CD4-positive, alpha-beta memory T cell (primary cell): ENCODE measurements at regions of chr16 and their contacts with region 1.

Region 1: DNA sequence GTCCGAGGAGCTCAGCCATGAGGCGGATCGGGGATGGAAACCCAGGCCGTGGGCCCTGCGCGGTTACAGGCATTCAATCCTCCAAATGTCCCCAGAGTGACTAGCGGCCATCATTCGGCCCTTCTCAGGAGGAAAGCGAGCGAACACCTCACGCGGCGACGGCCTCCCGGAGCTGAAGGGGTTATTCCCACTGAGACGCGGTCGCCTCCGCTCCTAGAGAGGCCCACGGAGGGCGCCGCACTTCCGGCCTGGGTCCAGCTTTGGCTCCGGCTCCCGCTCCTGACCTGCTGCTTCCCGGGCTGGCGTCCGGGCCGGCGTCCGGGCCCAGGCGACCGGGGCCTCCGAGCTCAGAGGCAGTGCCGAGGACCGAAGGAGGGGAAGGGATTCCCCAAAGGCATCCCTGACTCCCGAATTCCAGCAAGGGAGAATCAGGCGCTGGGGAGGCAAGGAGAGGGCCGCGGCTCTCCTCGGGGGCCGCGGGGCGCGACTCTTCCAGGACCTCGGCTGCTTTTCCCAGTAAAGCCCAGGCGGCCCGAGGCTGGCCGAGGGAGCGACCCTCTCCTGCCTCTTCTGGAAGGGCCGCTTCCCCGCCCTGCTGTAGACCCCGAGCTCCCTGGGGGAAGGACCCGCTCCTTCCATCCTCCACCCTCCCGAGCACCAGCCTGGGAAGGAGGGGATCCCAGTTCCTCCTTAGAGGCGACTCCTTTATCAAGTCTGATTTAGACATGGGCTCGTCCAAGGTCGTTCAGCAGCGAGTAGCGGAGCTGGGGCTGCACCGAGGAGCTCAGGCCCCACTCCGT is 18.6 kb upstream of the ZNF629 start:
- DNase-seq: peak; percentile 40 to 51 (median 42)
- H3K4me3 ChIP-seq: peak overlapping the region; percentile 43 to 54
- H3K4me3 Mint-ChIP-seq: peak overlapping the region; percentile 73 to 91 (median 80)
- H3K27ac ChIP-seq: peak overlapping the region; percentile 47
- H3K27ac Mint-ChIP-seq: peak overlapping the region; percentile 25 to 84 (median 50)
- H3K4me1 ChIP-seq: peaks cover 19% of the 10 kb centered on the region
- H3K4me1 Mint-ChIP-seq: peaks cover 9 to 28% (median 13%) of the 10 kb centered on the region in 4 donors
- H3K27me3 ChIP-seq: no peaks in the 10 kb centered on the region
- H3K27me3 Mint-ChIP-seq: no peaks in the 10 kb centered on the region

Region 2: GRCh38 chr16:30637942-30638341 is 167.6 kb before region 1 on chr16:
- CTCF ChIA-PET with region 1: no interaction called
- POLR2A ChIA-PET with region 1: no interaction called
- intact Hi-C with region 1: no loop called
- DNase-seq: peak in 4 of 5 donors; percentile 35 to 54 (median 36)
- H3K4me3 ChIP-seq: no peak overlapping the region
- H3K4me3 Mint-ChIP-seq: no peak overlapping the region
- H3K27ac ChIP-seq: no peak overlapping the region
- H3K27ac Mint-ChIP-seq: peak overlapping the region in 2 of 7 donors; percentile 53 to 68
- H3K4me1 ChIP-seq: peaks cover 13% of the 10 kb centered on the region
- H3K4me1 Mint-ChIP-seq: peaks cover 2 to 16% (median 10%) of the 10 kb centered on the region in 4 donors
- H3K27me3 ChIP-seq: no peaks in the 10 kb centered on the region
- H3K27me3 Mint-ChIP-seq: no peaks in the 10 kb centered on the region

Region 3: GRCh38 chr16:30747799-30748634 is 57.6 kb before region 1 on chr16 and contains the start of gene PHKG2:
- CTCF ChIA-PET with region 1: no interaction called
- POLR2A ChIA-PET with region 1: interaction called, 22 read pairs
- intact Hi-C with region 1: loop called (anchors 5 kb)
- DNase-seq: peak; percentile 94 to 96 (median 95)
- H3K4me3 ChIP-seq: peak within 1 kb of the TSS; percentile 65 to 71
- H3K4me3 Mint-ChIP-seq: peak within 1 kb of the TSS; percentile 89 to 97 (median 91)
- H3K27ac ChIP-seq: peak within 1 kb of the TSS; percentile 60
- H3K27ac Mint-ChIP-seq: peak within 1 kb of the TSS; percentile 73 to 94 (median 89)
- H3K4me1 ChIP-seq: peaks cover 7% of the 10 kb centered on the region
- H3K4me1 Mint-ChIP-seq: peaks cover 14 to 33% (median 20%) of the 10 kb centered on the region in 4 donors
- H3K27me3 ChIP-seq: no peaks in the 10 kb centered on the region
- H3K27me3 Mint-ChIP-seq: no peaks in the 10 kb centered on the region
- total RNA-seq, gene PHKG2: 54.1 to 54.9 TPM

Region 4: DNA sequence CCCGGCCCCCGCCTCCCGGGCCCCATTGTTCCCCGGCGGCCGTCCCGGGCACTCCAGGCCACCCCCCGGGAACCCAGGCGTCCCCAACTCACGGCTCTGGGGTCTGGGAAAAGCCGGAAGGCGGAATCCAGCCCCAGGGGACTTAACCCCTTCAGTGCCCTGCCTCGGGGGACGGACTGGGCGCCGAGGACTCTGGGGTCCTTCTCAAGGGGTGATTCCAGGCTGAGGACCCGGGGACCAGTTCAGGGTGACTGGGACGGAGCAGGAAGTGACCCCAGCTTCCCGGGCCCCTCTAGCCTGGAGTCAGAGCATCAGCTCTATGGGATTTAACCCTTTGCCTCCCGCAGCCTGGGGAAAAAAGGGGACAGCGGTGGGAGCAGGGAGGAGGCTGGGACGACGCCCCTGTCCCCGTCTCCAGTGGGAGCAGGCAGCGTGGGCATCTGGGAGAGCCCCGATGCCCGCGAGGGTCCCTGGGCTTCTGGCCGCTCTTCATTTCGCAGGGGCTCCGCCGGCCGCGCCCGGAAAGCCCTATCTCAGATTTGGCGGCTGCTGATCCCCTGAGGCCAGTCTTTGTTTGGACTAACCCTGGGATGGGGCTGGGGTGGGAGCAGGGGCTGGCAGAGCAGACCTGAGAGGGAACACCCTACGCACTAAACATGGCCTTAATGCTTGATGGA is 18.5 kb before region 1 on chr16 and contains the start of gene ZNF629:
- CTCF ChIA-PET with region 1: interaction called, 3 read pairs
- POLR2A ChIA-PET with region 1: interaction called, 12 read pairs
- intact Hi-C with region 1: loop called (anchors 1 kb)
- DNase-seq: peak in 1 of 5 donors; percentile 12
- H3K4me3 ChIP-seq: peak within 1 kb of the TSS; percentile 36 to 44
- H3K4me3 Mint-ChIP-seq: peak within 1 kb of the TSS; percentile 78 to 85 (median 80)
- H3K27ac ChIP-seq: no peak within 1 kb of the TSS
- H3K27ac Mint-ChIP-seq: peak within 1 kb of the TSS in 3 of 7 donors; percentile 23 to 70 (median 35)
- H3K4me1 ChIP-seq: peaks cover 10% of the 10 kb centered on the region
- H3K4me1 Mint-ChIP-seq: peaks cover 5 to 26% (median 17%) of the 10 kb centered on the region in 4 donors
- H3K27me3 ChIP-seq: peaks cover 5% of the 10 kb centered on the region
- H3K27me3 Mint-ChIP-seq: peaks cover 3 to 5% of the 10 kb centered on the region in 2 donors
- total RNA-seq, gene ZNF629: 4.7 to 5.4 TPM

Region 5: DNA sequence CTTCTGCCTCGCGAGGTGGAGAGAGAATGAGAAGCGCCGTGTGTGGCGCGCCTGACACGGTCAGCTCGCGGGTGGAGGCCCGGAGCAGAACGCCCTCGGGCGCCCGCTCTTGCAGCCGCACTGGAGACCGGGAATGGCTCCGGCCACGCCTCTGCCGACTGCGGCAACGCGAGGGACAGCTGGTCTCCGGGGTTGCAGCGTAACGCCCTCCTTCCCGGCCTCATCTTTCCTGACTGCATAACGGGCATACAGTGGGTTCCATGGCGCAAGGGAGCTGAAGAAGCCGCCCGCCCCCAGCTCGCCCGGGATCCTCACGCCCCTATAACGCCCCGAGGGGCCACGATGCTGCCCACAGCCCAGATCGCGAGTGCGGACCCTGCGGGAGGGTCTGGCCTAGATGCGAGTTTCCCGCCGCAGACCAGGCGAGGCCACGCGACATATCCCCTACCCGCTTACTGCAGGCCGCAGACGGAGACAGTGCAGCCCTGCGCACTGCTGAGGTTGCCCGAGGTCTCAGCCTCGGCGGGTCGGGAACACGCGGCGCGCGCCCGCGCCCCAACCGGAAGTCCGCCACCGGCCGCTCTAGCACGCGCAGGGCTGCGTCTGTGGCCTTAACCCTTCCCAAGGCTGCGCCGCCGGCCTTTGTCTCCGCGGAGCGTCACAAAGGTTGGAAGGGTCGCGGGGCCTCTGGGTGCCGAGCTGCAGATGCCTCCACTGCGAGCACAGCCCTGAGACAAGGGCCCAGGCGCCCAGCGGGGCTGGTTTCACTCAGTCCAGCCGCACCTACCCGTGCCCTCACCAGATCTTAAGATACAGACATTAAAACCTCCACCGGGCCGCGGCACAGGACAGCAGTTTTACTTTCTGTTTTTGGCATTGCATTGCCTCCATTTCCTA is 69.5 kb after region 1 on chr16:
- CTCF ChIA-PET with region 1: interaction called, 6 read pairs
- POLR2A ChIA-PET with region 1: interaction called, 45 read pairs
- intact Hi-C with region 1: loop called (anchors 1 kb)
- DNase-seq: peak; percentile 85 to 89 (median 87)
- H3K4me3 ChIP-seq: peak overlapping the region; percentile 89 to 94
- H3K4me3 Mint-ChIP-seq: peak overlapping the region; percentile 92 to 99 (median 97)
- H3K27ac ChIP-seq: peak overlapping the region; percentile 84
- H3K27ac Mint-ChIP-seq: peak overlapping the region; percentile 91 to 99 (median 94)
- H3K4me1 ChIP-seq: peaks cover 23% of the 10 kb centered on the region
- H3K4me1 Mint-ChIP-seq: peaks cover 16 to 50% (median 31%) of the 10 kb centered on the region in 4 donors
- H3K27me3 ChIP-seq: no peaks in the 10 kb centered on the region
- H3K27me3 Mint-ChIP-seq: no peaks in the 10 kb centered on the region

Region 6: GRCh38 chr16:30902029-30902972 is 96.7 kb after region 1 on chr16:
- CTCF ChIA-PET with region 1: interaction called, 7 read pairs
- POLR2A ChIA-PET with region 1: interaction called, 19 read pairs
- intact Hi-C with region 1: no loop called
- DNase-seq: peak; percentile 54 to 72 (median 58)
- H3K4me3 ChIP-seq: peak overlapping the region in 1 of 2 donors; percentile 68
- H3K4me3 Mint-ChIP-seq: peak overlapping the region; percentile 94 to 99 (median 96)
- H3K27ac ChIP-seq: peak overlapping the region; percentile 70
- H3K27ac Mint-ChIP-seq: peak overlapping the region; percentile 91 to 99 (median 98)
- H3K4me1 ChIP-seq: peaks cover 41% of the 10 kb centered on the region
- H3K4me1 Mint-ChIP-seq: peaks cover 19 to 47% (median 32%) of the 10 kb centered on the region in 4 donors
- H3K27me3 ChIP-seq: no peaks in the 10 kb centered on the region
- H3K27me3 Mint-ChIP-seq: no peaks in the 10 kb centered on the region

Region 7: DNA sequence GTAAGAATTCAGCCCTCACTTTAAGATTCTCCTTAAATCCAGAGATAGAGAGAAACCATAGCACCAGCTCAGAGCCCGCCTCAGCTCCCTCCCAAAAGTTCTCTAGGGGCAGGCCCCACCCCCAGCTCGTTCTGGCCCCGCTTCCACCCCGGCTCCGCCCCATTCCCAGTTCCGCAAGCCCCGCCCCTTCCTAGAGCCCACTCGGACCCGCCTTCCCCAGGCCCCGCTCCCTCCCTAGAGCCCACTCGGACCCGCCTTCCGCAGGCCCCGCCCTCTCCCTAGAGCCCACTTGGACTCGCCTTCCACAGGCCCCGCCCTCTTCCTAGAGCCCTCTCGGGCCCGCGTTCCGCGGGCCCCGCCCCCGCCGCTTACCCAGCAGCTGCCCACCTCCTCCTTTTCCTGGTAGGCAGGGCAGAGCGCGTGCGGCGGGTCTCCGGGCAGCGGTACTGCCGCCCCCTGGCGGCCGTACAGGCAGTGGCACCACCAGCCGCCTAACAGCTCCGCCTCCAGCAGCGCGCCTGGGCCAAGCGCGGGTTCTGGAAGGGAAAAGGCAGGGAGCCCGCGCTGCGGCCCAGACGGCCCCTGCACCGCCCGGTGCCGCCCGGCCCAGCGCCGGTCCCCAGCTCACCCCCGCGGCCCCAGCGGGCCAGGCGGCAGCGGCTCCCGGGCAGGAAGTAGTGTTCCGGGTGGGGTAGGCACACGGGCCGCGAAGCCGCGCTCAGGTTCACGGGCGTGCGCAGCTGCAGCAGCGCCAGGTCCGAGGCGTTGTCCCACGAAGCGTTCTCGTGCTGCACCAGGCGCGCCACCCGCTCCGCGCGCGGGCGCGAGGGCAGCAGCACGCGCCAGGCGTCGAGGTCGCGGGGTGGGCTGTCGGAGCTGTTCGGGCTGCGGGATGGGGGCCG is 336.8 kb after region 1 on chr16:
- CTCF ChIA-PET with region 1: no interaction called
- POLR2A ChIA-PET with region 1: no interaction called
- intact Hi-C with region 1: no loop called
- DNase-seq: peak; percentile 94 to 97 (median 96)
- H3K4me3 ChIP-seq: peak overlapping the region in 1 of 2 donors; percentile 75
- H3K4me3 Mint-ChIP-seq: peak overlapping the region; percentile 63 to 80 (median 74)
- H3K27ac ChIP-seq: peak overlapping the region; percentile 42
- H3K27ac Mint-ChIP-seq: peak overlapping the region; percentile 72 to 94 (median 91)
- H3K4me1 ChIP-seq: peaks cover 15% of the 10 kb centered on the region
- H3K4me1 Mint-ChIP-seq: peaks cover 3 to 14% (median 10%) of the 10 kb centered on the region in 4 donors
- H3K27me3 ChIP-seq: no peaks in the 10 kb centered on the region
- H3K27me3 Mint-ChIP-seq: no peaks in the 10 kb centered on the region